Endothelial cell of umbilical vein (primary cell): ENCODE measurements at regions of chr2 and their contacts with region 1.

Region 1: GRCh38 chr2:237674731-237675276 is 47.4 kb downstream of the LRRFIP1 start:
- DNase-seq: peak; percentile 96
- H3K4me3 ChIP-seq: peak overlapping the region in 2 of 3 experiments; percentile 12 to 16
- H3K27ac ChIP-seq: peak overlapping the region; percentile 96
- H3K4me1 ChIP-seq: peaks cover 56% of the 10 kb centered on the region
- H3K27me3 ChIP-seq: no peaks in the 10 kb centered on the region
- CTCF ChIP-seq: no peak
- POLR2A ChIP-seq: peak; percentile 45

Region 2: DNA sequence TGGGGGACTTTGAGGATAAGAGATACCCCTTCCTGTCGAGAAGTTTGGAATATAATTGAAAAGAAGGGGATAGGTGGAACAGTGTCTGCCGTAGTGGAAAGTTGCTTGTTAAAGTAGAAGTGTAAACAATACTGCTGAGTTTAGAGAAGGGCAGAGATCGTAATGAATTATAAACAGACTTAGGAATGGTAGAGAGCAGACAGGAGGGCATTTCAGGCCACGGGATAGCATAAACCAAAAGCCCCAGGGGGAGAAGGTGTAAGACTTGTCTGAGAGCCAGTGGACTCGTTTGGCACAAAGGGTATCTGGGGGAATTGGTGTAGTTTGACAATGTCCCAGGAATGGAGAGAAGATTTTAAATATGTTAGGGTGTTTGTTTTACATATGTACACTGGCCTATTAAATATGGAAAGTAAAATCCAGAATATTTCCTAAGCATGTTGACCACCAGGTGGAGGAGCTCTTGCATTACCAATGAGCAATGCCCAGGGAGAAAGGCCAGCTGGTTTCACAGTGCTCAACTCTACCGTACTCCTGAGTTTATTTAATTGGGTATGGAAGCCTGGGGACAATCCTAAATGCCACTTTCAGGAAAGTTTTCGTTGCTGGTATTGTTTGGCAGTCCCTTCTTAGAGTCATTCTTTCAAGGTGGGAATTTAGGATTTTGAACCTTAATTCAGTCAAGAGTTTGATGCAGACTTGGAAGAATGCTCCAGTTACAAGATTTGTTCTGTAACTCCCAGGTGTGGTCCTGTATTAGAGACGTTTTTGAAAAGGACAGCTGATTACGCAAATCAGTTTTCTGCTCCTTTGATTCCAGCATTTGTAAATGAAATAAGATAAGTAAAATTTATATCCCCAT is 581.7 kb before region 1 on chr2:
- CTCF ChIA-PET with region 1: no interaction called
- POLR2A ChIA-PET with region 1: no interaction called
- dilution Hi-C with region 1: no loop called
- intact Hi-C with region 1: loop called (anchors 10 kb)
- DNase-seq: peak; percentile 84
- H3K4me3 ChIP-seq: peak overlapping the region in 1 of 3 experiments; percentile 8
- H3K27ac ChIP-seq: peak overlapping the region; percentile 56
- H3K4me1 ChIP-seq: peaks cover 67% of the 10 kb centered on the region
- H3K27me3 ChIP-seq: no peaks in the 10 kb centered on the region
- CTCF ChIP-seq: peak; percentile 50 to 65
- POLR2A ChIP-seq: no peak

Region 3: GRCh38 chr2:237616734-237617586 is 57.8 kb before region 1 on chr2:
- CTCF ChIA-PET with region 1: interaction called, 5 read pairs
- POLR2A ChIA-PET with region 1: no interaction called
- dilution Hi-C with region 1: no loop called
- intact Hi-C with region 1: loop called (anchors 1 kb)
- DNase-seq: peak; percentile 91
- H3K4me3 ChIP-seq: no peak overlapping the region
- H3K27ac ChIP-seq: peak overlapping the region; percentile 99
- H3K4me1 ChIP-seq: peaks cover 54% of the 10 kb centered on the region
- H3K27me3 ChIP-seq: no peaks in the 10 kb centered on the region
- CTCF ChIP-seq: no peak
- POLR2A ChIP-seq: peak; percentile 28

Region 4: GRCh38 chr2:237685408-237685807 is 10.6 kb after region 1 on chr2:
- CTCF ChIA-PET with region 1: interaction called, 46 read pairs
- POLR2A ChIA-PET with region 1: interaction called, 7 read pairs
- dilution Hi-C with region 1: no loop called
- intact Hi-C with region 1: loop called (anchors 1 kb)
- DNase-seq: no peak
- H3K4me3 ChIP-seq: no peak overlapping the region
- H3K27ac ChIP-seq: no peak overlapping the region
- H3K4me1 ChIP-seq: peaks cover 27% of the 10 kb centered on the region
- H3K27me3 ChIP-seq: no peaks in the 10 kb centered on the region
- CTCF ChIP-seq: peak; percentile 20 to 27
- POLR2A ChIP-seq: no peak

Region 5: GRCh38 chr2:237714690-237715458 is 40.1 kb after region 1 on chr2:
- CTCF ChIA-PET with region 1: interaction called, 7 read pairs
- POLR2A ChIA-PET with region 1: no interaction called
- dilution Hi-C with region 1: no loop called
- intact Hi-C with region 1: loop called (anchors 1 kb)
- DNase-seq: peak; percentile 60
- H3K4me3 ChIP-seq: peak overlapping the region in 1 of 3 experiments; percentile 34
- H3K27ac ChIP-seq: peak overlapping the region; percentile 57
- H3K4me1 ChIP-seq: peaks cover 26% of the 10 kb centered on the region
- H3K27me3 ChIP-seq: no peaks in the 10 kb centered on the region
- CTCF ChIP-seq: no peak
- POLR2A ChIP-seq: no peak

Region 6: DNA sequence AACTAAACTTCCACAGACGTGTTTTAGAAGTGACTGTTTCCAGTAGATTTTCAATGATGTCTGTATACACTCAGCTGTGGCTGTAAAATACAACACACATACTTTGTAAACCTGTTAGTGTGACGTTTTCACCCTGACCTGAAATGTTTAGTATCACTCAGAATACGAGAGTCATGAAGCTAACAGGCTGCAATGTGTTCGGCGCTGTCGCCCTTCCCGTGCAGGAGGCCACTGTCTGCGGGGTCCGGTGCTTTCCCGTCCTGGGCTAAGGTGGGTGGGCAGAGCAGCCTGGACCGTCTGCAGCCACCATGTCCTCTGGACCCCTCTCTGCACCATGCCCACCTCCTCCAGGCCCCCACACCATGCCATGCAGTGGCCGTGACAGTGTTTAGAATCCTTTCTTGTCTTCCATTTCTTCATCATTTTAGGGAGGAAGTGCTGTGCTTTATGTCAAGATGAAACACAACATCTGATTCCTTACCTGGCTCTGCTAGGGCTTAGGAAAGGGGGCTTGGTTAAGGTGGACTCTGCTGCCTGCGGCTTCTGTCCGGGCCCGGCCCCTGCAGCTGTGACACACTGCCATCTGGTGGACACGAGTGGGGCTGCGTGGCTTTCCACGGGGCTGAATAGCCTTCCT is 69.9 kb after region 1 on chr2:
- CTCF ChIA-PET with region 1: interaction called, 207 read pairs
- POLR2A ChIA-PET with region 1: no interaction called
- dilution Hi-C with region 1: no loop called
- intact Hi-C with region 1: loop called (anchors 1 kb)
- DNase-seq: peak; percentile 86
- H3K4me3 ChIP-seq: no peak overlapping the region
- H3K27ac ChIP-seq: peak overlapping the region; percentile 80
- H3K4me1 ChIP-seq: peaks cover 21% of the 10 kb centered on the region
- H3K27me3 ChIP-seq: no peaks in the 10 kb centered on the region
- CTCF ChIP-seq: peak; percentile 96 to 97
- POLR2A ChIP-seq: peak; percentile 31

Region 7: DNA sequence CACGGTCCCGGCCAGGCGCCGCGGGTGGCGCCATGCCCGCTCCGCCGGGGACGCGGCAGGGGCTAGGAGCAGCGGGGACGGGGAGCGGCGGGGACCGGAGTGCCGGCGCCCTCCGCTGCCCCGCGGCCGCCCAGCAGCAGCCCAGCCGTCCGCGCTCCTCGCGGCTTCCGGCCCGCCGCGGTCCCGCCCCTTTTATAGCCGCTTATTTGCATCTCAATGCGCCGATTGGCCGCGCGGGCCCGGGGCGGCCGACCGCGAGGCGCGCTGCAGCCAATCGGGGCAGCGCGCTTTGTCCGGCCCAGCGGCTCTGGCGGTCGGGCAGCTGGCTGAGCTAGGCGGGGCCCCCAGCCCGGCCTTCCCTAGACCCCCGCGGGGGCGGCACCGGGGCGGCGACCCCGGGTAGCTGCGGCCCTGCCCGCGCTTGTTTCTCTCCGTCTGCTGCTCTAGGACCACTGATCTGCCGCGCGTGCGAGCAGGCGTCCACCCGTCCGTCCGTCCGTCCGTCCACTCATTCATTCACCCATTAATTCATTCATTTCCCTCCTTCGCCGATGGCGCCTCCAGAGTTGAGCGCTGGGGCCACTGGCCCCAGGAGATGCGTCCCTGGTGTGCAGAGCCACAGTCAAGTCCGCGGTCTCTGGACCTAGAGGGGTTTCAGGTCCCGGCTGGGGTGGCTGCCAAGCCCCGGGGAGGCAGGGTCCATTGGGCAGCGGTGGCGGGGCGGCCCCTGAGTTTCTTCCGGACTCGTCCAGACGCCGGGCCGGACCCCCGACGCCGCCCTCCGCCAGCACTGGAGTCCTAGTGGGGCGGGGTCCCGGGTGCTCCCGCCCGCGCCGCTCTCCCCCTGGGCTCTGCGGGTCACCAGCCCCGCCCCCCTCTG is 565.3 kb after region 1 on chr2 and contains the start of gene HES6:
- CTCF ChIA-PET with region 1: no interaction called
- POLR2A ChIA-PET with region 1: no interaction called
- dilution Hi-C with region 1: no loop called
- intact Hi-C with region 1: loop called (anchors 1 kb)
- DNase-seq: peak; percentile 84
- H3K4me3 ChIP-seq: peak within 1 kb of the TSS; percentile 6 to 36 (median 7)
- H3K27ac ChIP-seq: no peak within 1 kb of the TSS
- H3K4me1 ChIP-seq: peaks cover 3% of the 10 kb centered on the region
- H3K27me3 ChIP-seq: peaks cover 9 to 12% of the 10 kb centered on the region in 2 experiments
- CTCF ChIP-seq: no peak
- POLR2A ChIP-seq: peak; percentile 57
- total RNA-seq, gene HES6: 5.1 and 5.4 TPM in 2 replicates